ENCODE measurements at regions of chr7 and their contacts with region 1.

Region 1: GRCh38 chr7:95686109-95686508 is 86.2 kb upstream of the DYNC1I1 start:
- DNase-seq: no peak
- ATAC-seq: peak; percentile 43

Region 2: DNA sequence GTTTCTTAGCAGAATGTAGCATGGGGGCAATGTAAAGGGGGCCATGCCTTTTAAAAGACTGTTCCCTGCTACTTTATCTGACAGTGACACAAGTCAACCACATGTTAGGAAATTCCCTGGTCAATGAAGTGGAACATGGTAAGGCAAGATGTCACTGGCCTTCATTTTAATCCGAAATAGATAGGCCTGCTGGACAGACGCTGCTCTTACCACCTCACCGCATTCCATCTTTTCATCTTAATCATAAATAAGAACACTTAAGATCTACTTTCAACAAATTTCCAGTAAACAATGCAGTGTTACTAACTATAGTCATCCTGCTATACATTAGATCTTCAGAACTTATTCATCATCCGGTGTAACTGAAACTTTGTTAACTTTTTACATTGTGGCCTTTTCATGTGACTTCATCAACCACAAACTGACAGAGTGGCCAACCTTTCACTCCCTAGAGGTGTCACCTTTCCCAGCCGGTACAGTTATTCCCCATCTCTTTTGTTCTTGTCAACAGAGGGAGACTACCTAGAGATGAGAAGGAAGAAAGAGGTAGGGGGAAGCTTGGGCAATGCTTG is 184.8 kb before region 1 on chr7:
- intact Hi-C with region 1: no loop called
- DNase-seq: no peak
- ATAC-seq: no peak

Region 3: GRCh38 chr7:95511716-95512260 is 174.3 kb before region 1 on chr7:
- intact Hi-C with region 1: loop called (anchors 5 kb)
- DNase-seq: peak; percentile 53
- ATAC-seq: peak; percentile 95

Region 4: GRCh38 chr7:95527033-95527775 is 158.9 kb before region 1 on chr7:
- intact Hi-C with region 1: loop called (anchors 5 kb)
- DNase-seq: peak; percentile 39
- ATAC-seq: peak; percentile 93

Region 5: GRCh38 chr7:95544171-95544570 is 141.9 kb before region 1 on chr7:
- intact Hi-C with region 1: loop called (anchors 5 kb)
- DNase-seq: no peak
- ATAC-seq: no peak

Region 6: DNA sequence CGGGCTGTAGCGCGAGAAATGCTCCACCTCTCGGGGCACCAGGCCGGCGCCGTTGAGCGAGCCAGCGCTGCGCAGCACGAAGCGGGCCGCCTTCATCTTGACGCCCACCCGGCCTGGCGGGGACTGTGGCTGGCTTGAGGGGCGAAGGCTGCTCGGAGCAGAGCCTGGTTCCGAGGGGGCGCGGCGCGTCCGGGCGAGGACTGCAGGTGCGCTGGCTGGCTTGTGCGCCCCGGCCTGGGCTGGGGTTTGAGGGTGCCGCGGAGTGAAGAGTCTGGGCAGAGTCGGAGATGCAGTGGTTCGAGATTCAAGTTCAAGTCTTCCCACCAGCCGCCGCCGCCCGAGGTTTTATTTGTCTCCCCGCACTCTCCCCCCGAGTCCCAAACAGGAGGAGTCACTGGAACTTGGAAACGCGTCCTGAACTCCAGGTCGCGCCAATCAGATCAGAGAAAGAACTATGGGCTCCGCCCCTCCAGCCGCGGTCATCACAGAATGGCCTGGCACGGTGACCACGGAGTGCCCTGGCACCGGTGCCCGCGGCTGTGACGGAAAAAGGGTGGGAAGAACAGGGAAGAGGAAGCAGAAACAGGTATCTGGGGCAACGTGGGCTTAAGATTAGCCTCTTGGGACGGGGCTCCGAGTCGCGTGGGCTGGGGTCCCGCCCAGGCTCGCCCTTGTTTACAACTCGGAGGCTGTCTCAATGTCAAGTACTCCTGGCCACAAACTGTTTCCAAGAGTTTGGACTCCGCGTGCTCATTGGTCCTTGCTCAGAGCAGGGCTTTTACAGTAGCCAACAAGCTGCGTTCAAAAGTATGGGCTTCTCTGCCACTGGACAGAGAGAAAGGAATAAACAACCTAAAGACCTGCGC is 89.7 kb before region 1 on chr7 and contains the start of gene PDK4:
- intact Hi-C with region 1: loop called (anchors 5 kb)
- DNase-seq: peak; percentile 98
- ATAC-seq: peak; percentile 89
- total RNA-seq, gene PDK4: 374 TPM

Measured in Right ventricle myocardium superior (tissue), 1 donor.